ENCODE measurements at regions of chr11 and their contacts with region 1.

Region 1: DNA sequence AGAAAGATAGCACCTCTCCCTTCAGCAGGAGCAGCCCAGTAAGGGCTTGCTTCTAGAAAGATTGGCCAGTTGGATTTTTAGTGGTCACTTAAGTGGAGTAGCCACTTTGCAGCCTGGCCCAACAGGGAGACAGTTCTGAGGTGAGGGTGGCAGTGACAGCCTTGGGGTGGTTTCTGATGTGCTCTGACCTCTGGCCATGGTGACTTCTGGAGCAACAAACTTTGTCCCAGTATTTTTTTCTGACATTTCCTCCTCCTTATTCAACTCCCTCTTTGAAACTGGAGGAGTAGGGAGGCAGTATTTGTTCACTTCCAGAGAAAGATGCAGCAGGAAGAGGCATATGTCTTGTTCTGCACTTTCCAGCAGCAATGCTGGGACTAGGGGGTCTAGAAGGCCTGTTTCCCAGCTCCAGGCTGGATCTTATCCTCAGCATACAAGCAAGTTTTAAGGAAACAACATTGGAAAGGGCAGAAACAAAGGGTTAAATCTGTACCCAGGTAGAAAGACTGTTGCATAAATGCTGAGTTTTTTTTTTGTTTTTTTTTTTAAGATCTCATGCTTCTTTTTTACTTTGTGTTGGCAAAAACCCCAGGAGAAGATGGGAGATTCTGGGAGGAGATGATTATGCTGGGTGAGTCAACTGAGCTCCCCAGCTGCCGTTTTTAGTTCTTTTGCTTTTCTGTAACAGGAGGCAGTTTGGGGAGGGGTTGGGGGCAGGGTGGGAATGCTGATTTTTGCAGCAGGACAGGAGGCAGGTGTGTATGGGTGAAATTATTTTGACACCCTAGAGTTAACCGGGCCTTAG is 37.2 kb downstream of the RCOR2 start:
- DNase-seq: no peak
- ATAC-seq: no peak
- H3K4me3 ChIP-seq: no peak overlapping the region
- H3K4me3 Mint-ChIP-seq: peak overlapping the region in 9 of 10 donors; percentile 32 to 60 (median 46)
- H3K27ac ChIP-seq: no peak overlapping the region
- H3K27ac Mint-ChIP-seq: peak overlapping the region in 8 of 9 donors; percentile 5 to 90 (median 68)
- H3K4me1 ChIP-seq: peaks cover 17 to 50% of the 10 kb centered on the region in 2 donors
- H3K4me1 Mint-ChIP-seq: peaks cover 47 to 88% (median 79%) of the 10 kb centered on the region in 7 donors
- H3K27me3 ChIP-seq: no peaks in the 10 kb centered on the region
- H3K27me3 Mint-ChIP-seq: no peaks in the 10 kb centered on the region

Region 2: DNA sequence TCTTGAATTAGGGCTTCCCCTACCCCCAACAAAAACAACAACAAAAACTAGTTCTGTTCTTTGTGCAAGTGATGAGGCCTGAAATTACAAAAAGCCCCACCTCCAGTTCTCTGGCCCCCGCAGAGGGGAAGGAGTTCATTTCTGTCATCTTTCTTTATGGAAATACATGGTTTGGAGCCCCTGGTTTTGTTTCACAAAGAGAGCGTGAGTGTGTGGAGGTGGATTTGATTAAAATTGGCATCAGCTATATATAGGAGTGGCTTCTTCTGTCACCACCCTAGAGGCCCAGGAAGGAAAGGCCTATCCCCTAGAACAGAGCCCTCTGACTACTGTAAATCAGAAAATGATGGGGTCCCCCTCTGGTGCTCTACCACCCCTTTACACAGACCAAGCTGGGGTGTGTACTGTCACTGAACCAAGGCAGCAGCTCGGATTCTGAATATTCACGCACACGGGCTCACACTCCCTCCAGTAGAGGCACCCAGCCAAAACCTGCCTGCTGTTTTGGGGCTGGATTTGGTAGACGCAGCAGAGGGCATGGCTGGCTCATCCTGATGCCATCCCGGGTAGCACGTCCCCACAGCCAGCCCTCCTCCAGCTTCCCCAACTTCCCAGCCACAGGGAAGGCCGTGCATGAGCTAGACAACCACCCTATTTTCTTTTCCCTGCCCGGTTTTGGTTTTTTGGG is 17.8 kb after region 1 on chr11:
- CTCF ChIA-PET with region 1: interaction called, 3 read pairs
- POLR2A ChIA-PET with region 1: interaction called, 14 read pairs
- intact Hi-C with region 1: no loop called
- DNase-seq: no peak
- ATAC-seq: no peak
- H3K4me3 ChIP-seq: no peak overlapping the region
- H3K4me3 Mint-ChIP-seq: no peak overlapping the region
- H3K27ac ChIP-seq: no peak overlapping the region
- H3K27ac Mint-ChIP-seq: peak overlapping the region in 3 of 9 donors; percentile 12 to 47 (median 25)
- H3K4me1 ChIP-seq: peaks cover 5 to 8% of the 10 kb centered on the region in 2 donors
- H3K4me1 Mint-ChIP-seq: peaks cover 9 to 43% (median 31%) of the 10 kb centered on the region in 7 donors
- H3K27me3 ChIP-seq: no peaks in the 10 kb centered on the region
- H3K27me3 Mint-ChIP-seq: no peaks in the 10 kb centered on the region

Region 3: GRCh38 chr11:63985812-63986155 is 106.0 kb after region 1 on chr11:
- CTCF ChIA-PET with region 1: no interaction called
- POLR2A ChIA-PET with region 1: no interaction called
- intact Hi-C with region 1: no loop called
- DNase-seq: peak; percentile 40 to 74 (median 70)
- ATAC-seq: peak; percentile 87
- H3K4me3 ChIP-seq: peak overlapping the region; percentile 100
- H3K4me3 Mint-ChIP-seq: peak overlapping the region; percentile 91 to 99 (median 97)
- H3K27ac ChIP-seq: peak overlapping the region; percentile 89
- H3K27ac Mint-ChIP-seq: peak overlapping the region; percentile 95 to 99 (median 98)
- H3K4me1 ChIP-seq: peaks cover 14 to 20% of the 10 kb centered on the region in 2 donors
- H3K4me1 Mint-ChIP-seq: peaks cover 11 to 40% (median 32%) of the 10 kb centered on the region in 7 donors
- H3K27me3 ChIP-seq: no peaks in the 10 kb centered on the region
- H3K27me3 Mint-ChIP-seq: no peaks in the 10 kb centered on the region

Region 4: GRCh38 chr11:64269380-64270234 is 389.8 kb after region 1 on chr11:
- CTCF ChIA-PET with region 1: no interaction called
- POLR2A ChIA-PET with region 1: no interaction called
- intact Hi-C with region 1: no loop called
- DNase-seq: peak; percentile 89 to 98 (median 98)
- ATAC-seq: peak; percentile 82
- H3K4me3 ChIP-seq: peak overlapping the region; percentile 91
- H3K4me3 Mint-ChIP-seq: peak overlapping the region; percentile 95 to 100 (median 98)
- H3K27ac ChIP-seq: peak overlapping the region; percentile 95
- H3K27ac Mint-ChIP-seq: peak overlapping the region; percentile 94 to 99 (median 99)
- H3K4me1 ChIP-seq: peaks cover 8 to 10% of the 10 kb centered on the region in 2 donors
- H3K4me1 Mint-ChIP-seq: peaks cover 8 to 29% (median 24%) of the 10 kb centered on the region in 7 donors
- H3K27me3 ChIP-seq: no peaks in the 10 kb centered on the region
- H3K27me3 Mint-ChIP-seq: no peaks in the 10 kb centered on the region

Measured in naive thymus-derived CD4-positive, alpha-beta T cell (primary cell).